ENCODE measurements at regions of chr15 and their contacts with region 1.

Region 1: DNA sequence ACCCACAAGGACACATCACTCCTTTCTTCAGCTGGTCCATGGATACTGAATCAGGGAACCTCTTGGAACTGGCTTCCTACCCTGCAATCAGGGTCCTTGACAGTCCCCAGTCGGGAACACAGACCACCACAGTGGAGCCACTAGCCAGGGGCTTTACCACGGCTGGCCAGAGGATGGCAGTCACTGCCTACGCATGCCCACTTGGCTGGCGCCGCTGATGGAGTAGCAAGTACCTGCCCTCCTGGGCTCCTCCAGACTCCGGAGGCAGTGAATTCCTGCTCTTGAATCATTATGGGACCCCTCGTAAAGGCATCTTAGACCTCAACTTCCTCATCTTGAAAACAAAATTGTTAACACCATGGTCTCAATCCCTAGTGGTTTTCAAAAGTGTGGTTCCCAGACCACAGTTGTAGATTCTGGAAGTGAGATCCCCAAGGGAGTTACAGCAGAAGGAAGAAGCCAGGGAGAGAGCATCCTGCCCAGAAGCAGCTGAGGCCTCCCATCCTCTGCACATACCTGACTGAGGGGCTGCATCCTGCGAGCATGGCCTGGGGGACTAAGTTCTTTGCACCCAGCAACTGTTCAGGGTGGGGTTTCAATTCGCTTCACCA is 9.1 kb upstream of the SKIC8 start:
- DNase-seq: peak; percentile 46 to 69 (median 58)
- ATAC-seq: peak; percentile 54
- H3K4me3 ChIP-seq: no peak overlapping the region
- H3K27ac ChIP-seq: no peak overlapping the region
- H3K4me1 ChIP-seq: no peaks in the 10 kb centered on the region
- H3K27me3 ChIP-seq: peaks cover 0 to 7% of the 10 kb centered on the region in 2 donors
- CTCF ChIP-seq: peak; percentile 29 to 69 (median 45)
- POLR2A ChIP-seq: no peak

Region 2: DNA sequence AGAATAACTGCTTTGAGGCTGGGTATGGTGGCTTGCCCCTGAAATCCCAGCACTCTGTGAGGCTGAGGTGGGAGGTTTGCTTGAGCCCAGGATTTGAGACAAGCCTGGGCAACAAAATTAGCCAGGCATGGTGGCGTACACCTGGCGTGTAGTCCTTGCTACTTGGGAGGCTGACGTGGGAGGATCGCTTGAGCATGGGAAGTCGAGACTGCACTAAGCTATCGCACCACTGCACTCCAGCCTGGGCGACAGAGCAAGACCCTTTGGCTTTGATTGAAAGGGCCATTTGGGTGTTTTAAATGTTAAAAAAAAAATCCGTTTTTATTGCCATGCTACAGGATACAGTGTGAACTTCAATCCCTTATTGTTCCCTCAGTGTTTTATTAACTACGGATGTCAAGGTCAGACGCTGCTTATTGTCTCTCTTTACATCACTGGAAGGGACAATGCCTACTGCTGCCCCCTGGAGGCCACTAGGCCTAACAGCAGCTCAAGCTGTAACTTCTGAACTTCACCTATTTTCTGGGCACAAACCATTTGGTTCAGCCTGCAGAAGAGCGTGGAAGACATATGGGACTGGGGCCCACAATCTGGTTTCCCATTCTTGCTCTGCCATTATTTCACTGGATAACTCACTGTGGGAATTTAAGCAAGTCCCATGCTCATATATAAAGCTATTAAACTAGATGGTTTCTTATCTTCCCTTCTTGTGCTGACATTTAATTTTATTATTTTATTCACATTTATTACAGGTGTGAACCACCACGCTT is 114.2 kb after region 1 on chr15:
- intact Hi-C with region 1: loop called (anchors 10 kb)
- DNase-seq: peak; percentile 63 to 73 (median 66)
- ATAC-seq: peak; percentile 87
- H3K4me3 ChIP-seq: no peak overlapping the region
- H3K27ac ChIP-seq: no peak overlapping the region
- H3K4me1 ChIP-seq: no peaks in the 10 kb centered on the region
- H3K27me3 ChIP-seq: no peaks in the 10 kb centered on the region
- CTCF ChIP-seq: peak; percentile 68 to 83 (median 80)
- POLR2A ChIP-seq: no peak

Measured in body of pancreas (tissue), 4 donors.